PC-9 (cell line): ENCODE measurements at regions of chr1 and their contacts with region 1.

Region 1: GRCh38 chr1:98053471-98054366 is 132.9 kb upstream of the DPYD start:
- DNase-seq: peak in 1 of 2 experiments; percentile 82
- H3K4me3 ChIP-seq: peak overlapping the region; percentile 58
- H3K27ac ChIP-seq: no peak overlapping the region
- H3K4me1 ChIP-seq: no peaks in the 10 kb centered on the region
- H3K27me3 ChIP-seq: no peaks in the 10 kb centered on the region
- CTCF ChIP-seq: peak; percentile 94

Region 2: DNA sequence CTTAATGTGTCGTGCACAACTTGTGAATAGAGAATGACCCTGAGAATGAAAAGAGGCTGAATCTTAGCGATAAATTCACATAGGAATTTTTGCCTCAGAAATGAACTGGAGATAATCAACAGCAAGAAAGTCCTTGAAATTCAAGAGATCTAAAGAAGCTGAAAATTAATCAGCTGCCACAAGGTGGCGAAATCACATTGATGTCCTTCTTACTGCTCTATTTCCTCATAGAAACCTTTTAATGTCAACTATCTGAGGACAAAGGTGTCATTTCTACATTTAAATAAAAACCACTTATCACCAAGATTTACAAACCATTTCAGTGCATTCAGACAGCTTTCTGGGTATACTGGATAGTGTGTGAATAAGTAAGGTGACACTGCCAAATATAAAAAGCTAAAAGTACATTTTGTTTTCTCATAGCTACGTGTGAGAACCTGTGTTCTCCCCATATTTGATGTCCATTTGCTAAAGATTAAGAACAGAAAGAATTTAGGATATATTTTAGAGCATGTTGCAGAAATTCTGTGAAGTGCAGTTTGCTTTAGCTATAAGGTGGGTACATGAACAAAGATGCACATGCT is 1817.5 kb before region 1 on chr1:
- CTCF ChIA-PET with region 1: no interaction called
- POLR2A ChIA-PET with region 1: no interaction called
- intact Hi-C with region 1: loop called (anchors 5 kb)
- DNase-seq: peak in 1 of 2 experiments; percentile 20
- H3K4me3 ChIP-seq: no peak overlapping the region
- H3K27ac ChIP-seq: no peak overlapping the region
- H3K4me1 ChIP-seq: no peaks in the 10 kb centered on the region
- H3K27me3 ChIP-seq: no peaks in the 10 kb centered on the region
- CTCF ChIP-seq: peak; percentile 84

Region 3: GRCh38 chr1:97192872-97193572 is 860.7 kb before region 1 on chr1:
- CTCF ChIA-PET with region 1: no interaction called
- POLR2A ChIA-PET with region 1: no interaction called
- intact Hi-C with region 1: loop called (anchors 2 kb)
- DNase-seq: peak; percentile 68 to 96
- H3K4me3 ChIP-seq: no peak overlapping the region
- H3K27ac ChIP-seq: peak overlapping the region; percentile 60
- H3K4me1 ChIP-seq: peaks cover 16% of the 10 kb centered on the region
- H3K27me3 ChIP-seq: no peaks in the 10 kb centered on the region
- CTCF ChIP-seq: no peak; the same call in 1 of the 2 replicates

Region 4: DNA sequence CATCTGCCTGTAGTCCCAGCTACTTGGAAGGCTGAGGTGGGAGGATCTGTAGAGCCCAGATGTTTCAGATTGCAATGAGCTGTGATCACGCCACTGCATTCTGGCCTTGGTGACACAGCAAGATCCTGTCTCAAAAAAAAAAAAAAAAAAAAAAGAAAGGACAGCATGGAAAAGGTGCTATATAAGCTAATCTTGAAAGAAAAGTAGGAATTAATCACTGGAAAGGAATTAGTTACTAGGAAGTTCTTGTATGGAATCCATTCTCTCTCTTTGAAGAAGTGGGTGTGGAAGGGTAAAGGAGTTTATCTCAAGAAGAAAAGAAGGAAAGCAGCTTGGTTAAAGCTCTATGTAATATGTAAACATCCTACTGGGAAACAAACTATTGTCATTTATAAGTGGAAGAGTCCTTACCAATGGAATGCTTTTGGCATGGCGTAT is 472.1 kb before region 1 on chr1:
- CTCF ChIA-PET with region 1: no interaction called
- POLR2A ChIA-PET with region 1: no interaction called
- intact Hi-C with region 1: loop called (anchors 5 kb)
- DNase-seq: peak; percentile 40 to 74
- H3K4me3 ChIP-seq: no peak overlapping the region
- H3K27ac ChIP-seq: peak overlapping the region; percentile 7; the same call in 1 of the 2 replicates
- H3K4me1 ChIP-seq: no peaks in the 10 kb centered on the region
- H3K27me3 ChIP-seq: no peaks in the 10 kb centered on the region
- CTCF ChIP-seq: no peak

Region 5: GRCh38 chr1:97647776-97648175 is 405.9 kb before region 1 on chr1:
- CTCF ChIA-PET with region 1: no interaction called
- POLR2A ChIA-PET with region 1: no interaction called
- intact Hi-C with region 1: no loop called
- DNase-seq: no peak
- H3K4me3 ChIP-seq: no peak overlapping the region
- H3K27ac ChIP-seq: no peak overlapping the region
- H3K4me1 ChIP-seq: no peaks in the 10 kb centered on the region
- H3K27me3 ChIP-seq: no peaks in the 10 kb centered on the region
- CTCF ChIP-seq: no peak

Region 6: DNA sequence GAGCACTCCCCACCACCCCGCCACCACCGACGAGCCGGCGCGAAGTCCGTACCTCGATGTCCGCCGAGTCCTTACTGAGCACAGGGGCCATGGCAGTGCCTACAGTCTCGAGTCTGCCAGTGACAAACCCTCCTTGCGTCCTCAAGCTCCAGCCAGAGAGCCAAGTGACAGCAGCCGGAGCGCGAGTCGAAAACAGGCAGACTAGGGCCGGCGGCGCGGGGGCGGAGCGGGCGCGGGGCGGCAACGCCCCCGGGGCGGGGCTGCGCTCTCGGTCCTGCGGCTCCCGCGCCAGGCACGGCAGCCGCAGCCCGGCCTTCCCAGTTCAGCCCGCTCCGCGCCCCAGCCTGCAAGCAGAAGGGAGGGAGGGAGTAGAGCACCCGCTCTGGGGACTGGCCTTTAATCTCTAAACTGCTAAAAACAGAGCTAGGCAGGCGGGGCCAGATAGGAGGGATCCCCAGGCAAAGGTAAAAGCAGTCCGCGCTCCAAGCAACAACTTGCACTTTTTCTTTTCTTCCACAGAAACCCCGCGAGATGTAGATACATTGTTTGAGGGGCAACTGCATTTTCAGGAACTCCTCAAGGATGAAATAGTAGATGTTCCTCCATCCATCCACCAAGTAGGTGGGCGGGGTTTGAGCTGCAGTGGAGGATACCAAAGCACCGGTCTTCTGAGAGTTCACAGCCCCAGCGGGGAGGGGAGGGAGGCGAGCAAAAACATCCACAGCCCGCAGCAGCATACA is 132.7 kb before region 1 on chr1 and contains the start of gene DPYD:
- CTCF ChIA-PET with region 1: no interaction called
- POLR2A ChIA-PET with region 1: no interaction called
- intact Hi-C with region 1: loop called (anchors 2 kb)
- DNase-seq: peak; percentile 85 to 92
- H3K4me3 ChIP-seq: peak within 1 kb of the TSS; percentile 81
- H3K27ac ChIP-seq: peak within 1 kb of the TSS; percentile 42
- H3K4me1 ChIP-seq: peaks cover 21% of the 10 kb centered on the region
- H3K27me3 ChIP-seq: no peaks in the 10 kb centered on the region
- CTCF ChIP-seq: no peak
- total RNA-seq, gene DPYD: 20.0 and 24.1 TPM in 2 replicates

Region 7: DNA sequence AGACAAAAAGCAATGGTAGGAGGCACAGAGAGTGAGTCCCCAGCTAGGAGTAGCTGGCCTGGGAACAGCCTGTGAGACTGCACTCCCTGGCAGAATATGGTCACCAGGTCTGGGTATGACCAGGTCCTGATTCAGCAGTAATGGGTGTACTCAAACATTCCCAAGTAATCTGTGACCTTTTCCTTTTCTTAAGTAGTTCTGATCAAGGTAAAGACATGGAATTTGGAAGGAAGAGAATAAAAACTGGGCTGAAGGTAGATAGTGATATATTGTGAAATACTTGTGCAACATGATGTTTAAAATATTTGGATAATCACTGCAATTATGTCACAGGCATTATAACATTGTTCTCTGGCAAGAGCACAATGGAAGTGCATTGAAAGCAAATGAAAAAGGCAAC is 14.3 kb after region 1 on chr1:
- CTCF ChIA-PET with region 1: no interaction called
- POLR2A ChIA-PET with region 1: no interaction called
- intact Hi-C with region 1: no loop called
- DNase-seq: no peak
- H3K4me3 ChIP-seq: no peak overlapping the region
- H3K27ac ChIP-seq: no peak overlapping the region
- H3K4me1 ChIP-seq: no peaks in the 10 kb centered on the region
- H3K27me3 ChIP-seq: no peaks in the 10 kb centered on the region
- CTCF ChIP-seq: no peak

Region 8: GRCh38 chr1:98078596-98078995 is 24.9 kb after region 1 on chr1:
- CTCF ChIA-PET with region 1: no interaction called
- POLR2A ChIA-PET with region 1: no interaction called
- intact Hi-C with region 1: no loop called
- DNase-seq: no peak
- H3K4me3 ChIP-seq: no peak overlapping the region
- H3K27ac ChIP-seq: no peak overlapping the region
- H3K4me1 ChIP-seq: no peaks in the 10 kb centered on the region
- H3K27me3 ChIP-seq: no peaks in the 10 kb centered on the region
- CTCF ChIP-seq: no peak

Region 9: DNA sequence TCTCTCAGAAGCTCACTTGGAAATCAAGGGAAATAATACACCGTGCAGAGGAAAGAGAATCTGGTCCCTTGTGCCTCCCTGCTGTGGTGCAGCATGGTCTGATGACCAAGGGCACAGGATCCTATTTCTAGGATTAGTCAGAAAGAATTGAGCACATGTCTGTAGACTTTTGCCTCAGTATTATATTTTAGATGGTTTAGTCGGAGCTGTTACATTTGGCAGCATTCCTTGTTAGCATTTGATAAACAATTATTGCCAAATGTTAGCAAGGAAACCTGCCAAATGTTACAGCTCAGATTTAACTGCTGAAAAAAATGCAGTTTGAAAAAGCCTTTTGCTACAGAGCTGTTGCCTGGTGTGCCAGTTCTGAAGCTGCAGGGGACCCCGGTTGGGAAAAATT is 50.6 kb after region 1 on chr1:
- CTCF ChIA-PET with region 1: no interaction called
- POLR2A ChIA-PET with region 1: no interaction called
- intact Hi-C with region 1: no loop called
- DNase-seq: peak in 1 of 2 experiments; percentile 23
- H3K4me3 ChIP-seq: no peak overlapping the region
- H3K27ac ChIP-seq: no peak overlapping the region
- H3K4me1 ChIP-seq: no peaks in the 10 kb centered on the region
- H3K27me3 ChIP-seq: no peaks in the 10 kb centered on the region
- CTCF ChIP-seq: no peak

Region 10: DNA sequence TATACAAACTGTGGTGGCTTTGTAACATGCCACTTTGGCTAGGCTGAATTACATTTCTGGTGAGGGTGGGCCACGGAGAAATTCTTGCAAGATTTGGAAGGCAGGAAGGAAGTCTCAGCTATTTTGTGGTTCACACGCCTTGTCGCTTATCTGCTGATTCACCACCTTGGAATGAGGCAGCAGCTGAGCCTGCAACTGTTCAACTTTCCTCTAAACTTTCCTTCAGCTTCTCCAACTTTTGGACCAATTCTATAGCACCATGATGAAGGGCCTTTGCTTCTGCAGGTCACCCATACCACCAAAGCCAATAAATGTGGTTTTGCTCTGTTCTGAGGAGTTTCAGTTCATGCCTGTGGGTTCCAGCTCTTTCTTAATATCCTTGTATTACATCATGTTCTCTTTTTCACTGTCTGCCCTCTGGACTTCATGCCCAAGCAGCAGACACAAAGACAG is 270.2 kb after region 1 on chr1:
- CTCF ChIA-PET with region 1: no interaction called
- POLR2A ChIA-PET with region 1: no interaction called
- intact Hi-C with region 1: loop called (anchors 1 kb)
- DNase-seq: peak; percentile 83 to 97
- H3K4me3 ChIP-seq: peak overlapping the region; percentile 24; the same call in 1 of the 2 replicates
- H3K27ac ChIP-seq: peak overlapping the region; percentile 97
- H3K4me1 ChIP-seq: peaks cover 52% of the 10 kb centered on the region
- H3K27me3 ChIP-seq: no peaks in the 10 kb centered on the region
- CTCF ChIP-seq: no peak